Right ventricle myocardium inferior (tissue), 1 donor: ENCODE measurements at regions of chr14 and their contacts with region 1.

Region 1: DNA sequence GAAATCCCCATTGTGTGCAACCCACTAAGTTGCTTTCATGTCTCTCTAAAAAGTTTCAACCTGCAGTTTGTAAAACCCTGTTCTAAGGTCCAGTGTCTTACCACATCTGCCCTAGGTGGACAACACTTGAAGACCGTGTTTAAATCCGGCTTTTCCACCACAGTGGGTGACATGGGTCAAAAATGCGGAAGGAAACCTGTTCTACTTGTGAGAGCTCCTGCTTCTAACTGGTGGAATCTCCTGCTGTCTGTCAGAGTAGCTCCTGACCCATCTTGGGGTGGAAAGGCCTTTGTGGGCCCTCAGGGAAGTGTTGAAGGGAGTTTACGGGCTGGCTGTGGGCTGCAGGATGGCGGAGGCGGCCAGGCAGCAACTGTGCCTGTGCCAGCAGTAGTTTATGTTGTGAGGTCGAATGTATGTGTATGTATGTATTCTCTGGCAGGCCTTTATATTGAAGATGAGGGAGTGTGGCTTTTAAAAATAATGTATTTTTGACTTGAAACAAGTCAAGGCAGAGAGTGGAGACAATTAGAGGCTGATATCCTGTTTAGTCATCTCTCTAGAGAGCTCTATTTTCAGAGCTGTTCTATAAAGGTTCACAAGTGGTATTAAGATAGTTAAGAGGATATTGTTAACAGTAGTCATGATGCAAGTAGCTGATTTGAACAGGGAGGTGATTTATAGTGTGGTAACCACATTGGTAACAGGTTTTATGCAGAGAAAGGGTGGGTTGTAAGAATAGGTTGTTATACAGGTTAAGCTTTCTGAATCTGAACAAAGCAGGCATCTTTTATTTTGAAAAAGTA is 67.0 kb downstream of the PRKCH start:
- DNase-seq: no peak
- ATAC-seq: no peak

Region 2: GRCh38 chr14:61409776-61410175 is 21.4 kb after region 1 on chr14:
- intact Hi-C with region 1: loop called (anchors 2 kb)
- DNase-seq: no peak
- ATAC-seq: no peak